PC-3 (cell line): ENCODE measurements at regions of chr14 and their contacts with region 1.

Region 1: GRCh38 chr14:75715926-75716780 is 55.1 kb downstream of the TTLL5 start:
- DNase-seq: peak; percentile 80
- ATAC-seq: peak; percentile 50
- H3K4me3 ChIP-seq: no peak overlapping the region
- H3K27ac ChIP-seq: peak overlapping the region; percentile 61
- H3K4me1 ChIP-seq: peaks cover 42% of the 10 kb centered on the region
- H3K27me3 ChIP-seq: no peaks in the 10 kb centered on the region
- CTCF ChIP-seq: no peak

Region 2: DNA sequence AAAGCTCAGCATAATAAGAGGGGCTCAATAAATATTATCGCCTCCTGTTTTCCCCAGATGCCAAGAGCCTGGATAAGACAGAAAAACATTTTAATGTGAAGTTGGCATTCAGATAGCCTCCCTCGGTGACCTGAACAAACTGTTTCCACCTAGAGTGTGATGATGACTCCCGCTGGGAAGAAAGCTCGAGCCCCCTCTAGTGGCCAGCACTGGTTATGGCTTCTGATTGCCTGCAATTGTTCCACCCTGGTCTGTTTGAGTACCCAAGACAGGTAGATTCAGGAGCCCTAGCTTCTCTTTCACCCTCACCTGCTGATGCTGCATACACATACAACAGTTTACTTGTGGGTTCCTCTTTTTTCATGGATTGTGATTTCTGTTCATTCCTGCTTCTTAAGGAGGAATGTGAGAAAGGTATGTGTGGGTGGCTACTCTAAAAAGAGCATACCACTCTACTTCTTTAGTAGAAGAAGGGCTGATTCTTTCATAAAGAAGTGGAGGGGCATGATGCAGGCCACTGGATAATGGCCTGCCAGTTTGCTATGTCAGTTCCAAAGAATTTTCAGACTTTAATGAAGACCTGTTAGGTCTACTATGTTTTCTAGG is 61.9 kb before region 1 on chr14:
- CTCF ChIA-PET with region 1: no interaction called
- POLR2A ChIA-PET with region 1: no interaction called
- intact Hi-C with region 1: no loop called
- DNase-seq: peak; percentile 87
- ATAC-seq: peak; percentile 95
- H3K4me3 ChIP-seq: no peak overlapping the region
- H3K27ac ChIP-seq: no peak overlapping the region
- H3K4me1 ChIP-seq: peaks cover 12% of the 10 kb centered on the region
- H3K27me3 ChIP-seq: no peaks in the 10 kb centered on the region
- CTCF ChIP-seq: peak; percentile 96

Region 3: DNA sequence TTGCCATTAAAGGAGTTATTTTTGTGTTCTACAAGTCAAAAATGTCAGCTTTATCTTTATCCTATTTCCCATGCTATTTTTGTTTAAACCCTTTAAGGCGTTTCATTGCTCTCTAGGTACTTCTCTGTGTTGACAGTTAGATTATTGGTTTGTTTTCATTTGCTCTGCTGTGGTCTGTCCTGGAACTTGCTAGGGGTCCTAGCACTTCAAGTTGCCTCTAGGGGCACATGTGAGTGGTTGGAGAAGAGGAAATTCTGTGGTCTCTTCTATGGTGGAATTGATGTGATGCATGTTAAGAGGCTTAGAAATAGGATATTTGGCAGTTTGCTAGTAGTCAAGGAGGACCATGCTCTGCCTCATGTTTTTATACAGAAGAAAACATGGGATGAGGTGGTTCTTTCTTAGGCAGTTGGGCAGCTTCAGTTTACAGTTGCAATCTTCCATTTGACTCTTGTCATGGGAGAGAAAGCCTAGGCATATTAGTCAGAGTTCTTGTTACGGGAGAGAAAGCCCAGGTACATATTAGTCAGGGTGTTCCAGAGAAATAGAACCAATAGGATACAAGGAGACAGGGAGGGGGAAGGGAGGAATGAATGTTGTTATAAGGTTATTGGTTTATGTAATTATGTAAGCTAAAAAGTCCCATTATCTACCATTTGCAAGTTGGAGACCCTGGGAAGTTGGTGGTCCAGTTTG is 40.7 kb before region 1 on chr14:
- CTCF ChIA-PET with region 1: no interaction called
- POLR2A ChIA-PET with region 1: no interaction called
- intact Hi-C with region 1: no loop called
- DNase-seq: peak; percentile 26
- ATAC-seq: no peak
- H3K4me3 ChIP-seq: no peak overlapping the region
- H3K27ac ChIP-seq: no peak overlapping the region
- H3K4me1 ChIP-seq: peaks cover 6% of the 10 kb centered on the region; the same call in 1 of the 2 replicates
- H3K27me3 ChIP-seq: no peaks in the 10 kb centered on the region
- CTCF ChIP-seq: peak; percentile 44; the same call in 1 of the 2 replicates

Region 4: DNA sequence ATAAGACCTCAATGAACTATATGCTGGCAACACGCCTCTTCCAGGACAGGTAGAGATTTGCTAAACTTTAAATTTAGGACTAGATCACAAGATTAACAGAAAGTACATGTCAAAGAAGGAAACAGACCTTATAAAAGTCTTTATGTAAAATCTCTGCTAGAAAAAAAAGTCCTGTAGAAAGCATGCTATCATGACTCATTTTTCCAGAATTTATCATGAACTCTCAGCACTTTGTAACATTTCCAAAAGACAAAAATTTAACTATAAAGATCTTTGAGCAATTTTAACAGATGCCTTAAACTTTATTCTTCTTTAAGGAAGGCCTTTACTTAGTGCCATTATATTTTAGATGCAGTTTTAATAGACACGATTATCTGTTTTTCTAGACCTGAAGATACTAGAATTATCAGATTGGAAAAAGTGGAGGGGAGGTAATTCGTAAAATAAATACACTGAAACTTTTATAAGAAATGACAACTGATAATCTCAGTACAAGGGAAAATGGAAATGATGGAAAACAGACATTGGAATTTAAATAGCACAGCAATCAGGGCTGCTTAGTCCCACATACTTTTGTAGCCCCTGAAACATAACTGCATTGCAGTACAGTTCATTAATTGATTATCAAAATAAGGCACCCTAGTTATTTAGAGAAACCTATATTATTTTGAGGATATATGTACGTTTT is 36.9 kb after region 1 on chr14:
- CTCF ChIA-PET with region 1: no interaction called
- POLR2A ChIA-PET with region 1: no interaction called
- intact Hi-C with region 1: loop called (anchors 5 kb)
- DNase-seq: no peak
- ATAC-seq: no peak
- H3K4me3 ChIP-seq: no peak overlapping the region
- H3K27ac ChIP-seq: no peak overlapping the region
- H3K4me1 ChIP-seq: no peaks in the 10 kb centered on the region
- H3K27me3 ChIP-seq: no peaks in the 10 kb centered on the region
- CTCF ChIP-seq: no peak

Region 5: DNA sequence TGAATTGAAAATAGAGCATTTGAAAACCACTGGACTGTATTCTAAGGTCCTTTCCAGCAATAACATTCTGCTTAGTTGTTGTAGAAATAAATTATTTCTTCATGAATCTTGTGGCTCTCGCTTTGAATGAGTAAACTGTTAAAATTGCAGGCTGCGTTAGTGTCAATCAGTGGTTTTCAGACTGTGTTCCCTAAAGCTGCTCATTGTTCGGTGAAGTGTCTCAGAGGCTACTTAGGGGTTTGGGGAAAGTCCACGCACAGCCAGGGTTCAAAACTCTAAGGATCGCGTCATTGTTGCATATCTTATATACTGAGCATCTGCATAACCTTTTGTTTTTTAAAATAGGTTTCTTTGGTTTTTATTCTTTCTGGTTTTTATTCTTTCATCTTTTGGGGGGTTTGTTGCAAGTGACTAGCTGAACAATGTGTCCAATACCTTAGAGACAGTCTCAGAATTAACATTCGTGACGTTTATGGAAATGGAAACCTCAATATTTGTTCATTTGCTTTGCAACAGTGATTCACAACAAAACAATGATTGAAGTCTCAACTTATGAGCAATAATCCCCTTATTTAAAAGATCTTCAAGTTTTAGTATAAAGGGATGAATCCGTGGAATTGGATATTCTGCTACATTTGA is 53.0 kb after region 1 on chr14:
- CTCF ChIA-PET with region 1: interaction called, 4 read pairs
- POLR2A ChIA-PET with region 1: no interaction called
- intact Hi-C with region 1: loop called (anchors 2 kb)
- DNase-seq: peak; percentile 69
- ATAC-seq: peak; percentile 88
- H3K4me3 ChIP-seq: no peak overlapping the region
- H3K27ac ChIP-seq: peak overlapping the region; percentile 33
- H3K4me1 ChIP-seq: peaks cover 20% of the 10 kb centered on the region
- H3K27me3 ChIP-seq: no peaks in the 10 kb centered on the region
- CTCF ChIP-seq: no peak